Activated CD4-positive, alpha-beta T cell treated with anti-CD3 and anti-CD28 coated beads, Interleukin-2, amount 10 ng/mL, durations not matched to agents 24 days and 14 days (primary cell): ENCODE measurements at regions of chr18 and their contacts with region 1.

Region 1: GRCh38 chr18:3245853-3246634 is 1.6 kb upstream of the MYL12A start:
- DNase-seq: peak; percentile 95
- H3K4me3 Mint-ChIP-seq: peak overlapping the region; percentile 98
- H3K27ac Mint-ChIP-seq: peak overlapping the region; percentile 95
- H3K4me1 Mint-ChIP-seq: peaks cover 44% of the 10 kb centered on the region
- H3K27me3 Mint-ChIP-seq: no peaks in the 10 kb centered on the region

Region 2: GRCh38 chr18:2758309-2758708 is 487.7 kb before region 1 on chr18:
- intact Hi-C with region 1: loop called (anchors 10 kb)
- DNase-seq: no peak
- H3K4me3 Mint-ChIP-seq: no peak overlapping the region
- H3K27ac Mint-ChIP-seq: peak overlapping the region; percentile 12
- H3K4me1 Mint-ChIP-seq: peaks cover 18% of the 10 kb centered on the region
- H3K27me3 Mint-ChIP-seq: no peaks in the 10 kb centered on the region

Region 3: GRCh38 chr18:2958819-2959298 is 287.2 kb before region 1 on chr18:
- intact Hi-C with region 1: loop called (anchors 1 kb)
- DNase-seq: peak; percentile 87
- H3K4me3 Mint-ChIP-seq: peak overlapping the region; percentile 82
- H3K27ac Mint-ChIP-seq: peak overlapping the region; percentile 99
- H3K4me1 Mint-ChIP-seq: peaks cover 78% of the 10 kb centered on the region
- H3K27me3 Mint-ChIP-seq: no peaks in the 10 kb centered on the region

Region 4: GRCh38 chr18:3012964-3013804 is 232.9 kb before region 1 on chr18 and contains the start of gene LPIN2:
- intact Hi-C with region 1: loop called (anchors 1 kb)
- DNase-seq: peak; percentile 99
- H3K4me3 Mint-ChIP-seq: peak within 1 kb of the TSS; percentile 93
- H3K27ac Mint-ChIP-seq: peak within 1 kb of the TSS; percentile 96
- H3K4me1 Mint-ChIP-seq: peaks cover 56% of the 10 kb centered on the region
- H3K27me3 Mint-ChIP-seq: no peaks in the 10 kb centered on the region
- total RNA-seq, gene LPIN2: 111 and 118 TPM in 2 replicates

Region 5: GRCh38 chr18:3199942-3200645 is 46.0 kb before region 1 on chr18:
- intact Hi-C with region 1: loop called (anchors 5 kb)
- DNase-seq: no peak
- H3K4me3 Mint-ChIP-seq: no peak overlapping the region
- H3K27ac Mint-ChIP-seq: no peak overlapping the region
- H3K4me1 Mint-ChIP-seq: no peaks in the 10 kb centered on the region
- H3K27me3 Mint-ChIP-seq: peaks cover 11% of the 10 kb centered on the region